ENCODE measurements at regions of chr11 and their contacts with region 1.

Region 1: DNA sequence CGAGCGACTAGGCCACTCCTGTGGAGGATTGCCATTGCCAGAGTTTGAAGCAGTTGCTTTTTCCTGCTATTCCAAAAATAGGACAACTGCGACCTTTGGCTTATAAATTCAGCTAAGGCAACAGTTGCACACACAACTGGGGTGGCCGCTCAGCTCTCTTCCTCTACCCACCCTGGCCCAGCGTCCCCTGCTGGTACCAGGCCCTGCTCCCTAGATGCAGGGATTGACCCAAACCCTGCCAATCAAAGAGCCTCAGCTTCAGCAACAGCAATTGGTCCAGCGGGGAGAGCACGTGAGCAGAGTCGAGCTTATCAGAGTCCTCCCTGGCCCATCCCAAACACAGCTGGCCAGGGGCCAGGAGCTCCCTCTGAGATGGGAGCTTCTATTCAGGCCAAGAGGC is 22.0 kb upstream of the CABP2 start:
- DNase-seq: no peak
- H3K4me3 ChIP-seq: no peak overlapping the region
- H3K27ac ChIP-seq: no peak overlapping the region
- H3K4me1 ChIP-seq: peaks cover 0 to 5% (median 0%) of the 10 kb centered on the region in 4 experiments; a peak in 2 of 7 replicates
- H3K27me3 ChIP-seq: no peaks in the 10 kb centered on the region; a peak in 1 of 7 replicates
- CTCF ChIP-seq: peak in 2 of 3 experiments; percentile 29 to 44; a peak in 2 of 4 replicates
- EP300 ChIP-seq: no peak
- POLR2A ChIP-seq: no peak
- RAD21 ChIP-seq: no peak

Region 2: GRCh38 chr11:67530282-67530850 is 14.9 kb before region 1 on chr11:
- CTCF ChIA-PET with region 1: interaction called, 11 read pairs
- POLR2A ChIA-PET with region 1: interaction called, 3 read pairs
- DNase-seq: no peak
- H3K4me3 ChIP-seq: no peak overlapping the region
- H3K27ac ChIP-seq: no peak overlapping the region
- H3K4me1 ChIP-seq: no peaks in the 10 kb centered on the region; a peak in 1 of 7 replicates
- H3K27me3 ChIP-seq: no peaks in the 10 kb centered on the region
- CTCF ChIP-seq: no peak
- EP300 ChIP-seq: no peak
- POLR2A ChIP-seq: no peak
- RAD21 ChIP-seq: no peak

Region 3: GRCh38 chr11:67558084-67558781 is 13.0 kb after region 1 on chr11:
- CTCF ChIA-PET with region 1: interaction called, 10 read pairs
- POLR2A ChIA-PET with region 1: interaction called, 3 read pairs
- DNase-seq: no peak
- H3K4me3 ChIP-seq: no peak overlapping the region
- H3K27ac ChIP-seq: no peak overlapping the region
- H3K4me1 ChIP-seq: peaks cover 0 to 1% (median 0%) of the 10 kb centered on the region in 4 experiments; a peak in 1 of 7 replicates
- H3K27me3 ChIP-seq: no peaks in the 10 kb centered on the region
- CTCF ChIP-seq: no peak
- EP300 ChIP-seq: no peak
- POLR2A ChIP-seq: no peak
- RAD21 ChIP-seq: no peak

Measured in H1 (cell line).